ENCODE measurements at regions of chr6 and their contacts with region 1.

Region 1: GRCh38 chr6:20056350-20056992 is 155.8 kb downstream of the MBOAT1 start:
- DNase-seq: peak; percentile 48
- H3K4me3 Mint-ChIP-seq: no peak overlapping the region
- H3K27ac Mint-ChIP-seq: no peak overlapping the region
- H3K4me1 Mint-ChIP-seq: no peaks in the 10 kb centered on the region
- H3K27me3 Mint-ChIP-seq: no peaks in the 10 kb centered on the region
- CTCF ChIP-seq: peak; percentile 54

Region 2: GRCh38 chr6:18752278-18753068 is 1304.0 kb before region 1 on chr6:
- CTCF ChIA-PET with region 1: interaction called, 6 read pairs
- POLR2A ChIA-PET with region 1: no interaction called
- intact Hi-C with region 1: loop called (anchors 1 kb)
- DNase-seq: no peak
- H3K4me3 Mint-ChIP-seq: no peak overlapping the region
- H3K27ac Mint-ChIP-seq: no peak overlapping the region
- H3K4me1 Mint-ChIP-seq: peaks cover 17% of the 10 kb centered on the region
- H3K27me3 Mint-ChIP-seq: peaks cover 61% of the 10 kb centered on the region
- CTCF ChIP-seq: no peak

Region 3: GRCh38 chr6:18997375-18997826 is 1059.1 kb before region 1 on chr6:
- CTCF ChIA-PET with region 1: interaction called, 6 read pairs
- POLR2A ChIA-PET with region 1: no interaction called
- intact Hi-C with region 1: loop called (anchors 1 kb)
- DNase-seq: peak; percentile 64
- H3K4me3 Mint-ChIP-seq: no peak overlapping the region
- H3K27ac Mint-ChIP-seq: no peak overlapping the region
- H3K4me1 Mint-ChIP-seq: no peaks in the 10 kb centered on the region
- H3K27me3 Mint-ChIP-seq: peaks cover 61% of the 10 kb centered on the region
- CTCF ChIP-seq: peak; percentile 74

Region 4: DNA sequence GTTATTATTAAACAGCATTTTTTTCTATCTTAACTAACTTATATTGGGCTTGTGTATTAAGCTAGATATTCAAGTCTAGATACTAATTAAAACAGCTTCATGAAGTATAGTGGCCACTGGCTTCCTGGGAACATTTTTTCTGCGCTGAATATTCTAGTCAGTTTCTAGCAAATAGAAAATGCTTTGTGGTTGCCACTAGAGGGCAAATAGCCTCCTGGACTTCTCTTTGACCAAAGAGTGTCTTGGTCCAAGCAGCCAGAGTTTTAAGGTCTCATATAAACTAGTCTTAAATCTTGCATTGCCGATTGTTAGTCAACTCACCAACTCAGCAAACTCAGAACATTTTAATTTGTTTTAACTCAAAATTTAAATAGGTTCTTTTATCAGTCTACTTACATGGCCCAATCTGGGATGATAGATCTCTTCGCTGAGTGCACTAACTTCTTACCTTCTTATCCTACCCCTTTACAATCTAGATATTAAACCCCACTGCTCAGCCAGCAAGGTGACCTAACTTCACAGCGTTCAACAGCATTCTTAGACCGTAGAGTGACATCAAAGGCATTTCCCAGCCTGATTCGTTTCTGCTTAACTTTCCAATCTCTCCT is 243.9 kb before region 1 on chr6:
- CTCF ChIA-PET with region 1: interaction called, 4 read pairs
- POLR2A ChIA-PET with region 1: no interaction called
- intact Hi-C with region 1: loop called (anchors 5 kb)
- DNase-seq: peak; percentile 36
- H3K4me3 Mint-ChIP-seq: no peak overlapping the region
- H3K27ac Mint-ChIP-seq: no peak overlapping the region
- H3K4me1 Mint-ChIP-seq: no peaks in the 10 kb centered on the region
- H3K27me3 Mint-ChIP-seq: peaks cover 70% of the 10 kb centered on the region
- CTCF ChIP-seq: peak; percentile 51

Region 5: DNA sequence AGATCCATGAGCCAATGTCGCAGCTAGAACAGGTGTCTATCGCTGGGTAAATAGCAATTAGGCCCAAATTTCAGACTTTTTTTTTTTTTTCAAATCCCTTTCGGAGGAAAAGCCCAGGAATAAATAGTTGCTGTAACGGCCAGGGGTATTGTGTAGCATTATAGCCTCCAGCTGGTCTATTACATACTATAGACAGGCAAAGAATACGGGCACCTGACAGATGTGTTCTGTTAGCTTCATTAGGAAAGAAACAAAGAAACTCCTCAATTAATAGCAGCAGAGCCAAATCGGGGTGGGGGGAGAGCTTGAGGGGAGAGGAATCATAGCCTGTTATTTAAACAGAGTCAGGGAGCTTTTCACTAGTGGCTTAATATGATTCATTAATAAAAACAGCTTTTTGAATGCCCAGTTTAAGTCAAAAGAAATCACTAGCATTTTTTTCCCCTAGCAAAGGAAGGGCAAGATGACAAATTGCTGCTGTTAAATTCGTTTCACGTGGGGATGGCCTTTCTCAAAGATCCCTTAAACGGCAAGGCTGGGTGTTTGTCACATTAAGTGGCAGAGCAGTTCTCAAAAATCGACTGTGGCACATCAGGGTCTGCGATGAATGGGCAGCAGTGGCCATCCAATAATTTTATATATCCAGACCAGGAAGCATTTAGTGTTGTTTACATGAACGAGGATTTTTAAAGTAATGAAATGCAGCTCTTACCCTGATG is 79.9 kb before region 1 on chr6:
- CTCF ChIA-PET with region 1: no interaction called
- POLR2A ChIA-PET with region 1: no interaction called
- intact Hi-C with region 1: no loop called
- DNase-seq: no peak
- H3K4me3 Mint-ChIP-seq: no peak overlapping the region
- H3K27ac Mint-ChIP-seq: no peak overlapping the region
- H3K4me1 Mint-ChIP-seq: no peaks in the 10 kb centered on the region
- H3K27me3 Mint-ChIP-seq: peaks cover 31% of the 10 kb centered on the region
- CTCF ChIP-seq: no peak

Region 6: DNA sequence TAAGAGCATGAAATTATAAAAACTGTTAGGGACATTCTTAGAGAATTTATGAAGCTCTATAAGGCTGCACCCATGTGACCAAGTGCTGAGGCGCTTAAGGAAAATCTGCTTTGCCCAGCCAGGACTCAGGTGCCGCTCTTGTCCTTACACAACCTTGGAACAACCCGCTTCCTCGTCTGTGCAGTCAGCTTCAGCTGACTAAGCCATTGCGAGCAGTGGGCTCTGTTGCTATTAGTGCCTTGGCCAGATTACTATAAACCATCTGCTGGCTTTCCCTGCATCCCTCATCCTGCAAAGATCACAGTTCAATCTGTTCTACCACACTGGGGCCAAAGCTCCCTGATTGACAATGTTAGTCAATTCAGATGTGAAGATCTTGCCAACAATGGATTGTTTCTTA is 256.1 kb after region 1 on chr6:
- CTCF ChIA-PET with region 1: no interaction called
- POLR2A ChIA-PET with region 1: no interaction called
- intact Hi-C with region 1: no loop called
- DNase-seq: no peak
- H3K4me3 Mint-ChIP-seq: no peak overlapping the region
- H3K27ac Mint-ChIP-seq: no peak overlapping the region
- H3K4me1 Mint-ChIP-seq: no peaks in the 10 kb centered on the region
- H3K27me3 Mint-ChIP-seq: peaks cover 27% of the 10 kb centered on the region
- CTCF ChIP-seq: no peak

Measured in MCF 10A (cell line).